Aorta (tissue), 5 donors: ENCODE measurements at regions of chr5 and their contacts with region 1.

Region 1: GRCh38 chr5:10627160-10627701 is 63.4 kb downstream of the ANKRD33B start:
- DNase-seq: no peak
- ATAC-seq: peak; percentile 9
- H3K4me3 ChIP-seq: peak overlapping the region in 1 of 2 donors; percentile 15
- H3K27ac ChIP-seq: peak overlapping the region; percentile 2 to 46
- H3K4me1 ChIP-seq: no peaks in the 10 kb centered on the region
- H3K27me3 ChIP-seq: no peaks in the 10 kb centered on the region

Region 2: DNA sequence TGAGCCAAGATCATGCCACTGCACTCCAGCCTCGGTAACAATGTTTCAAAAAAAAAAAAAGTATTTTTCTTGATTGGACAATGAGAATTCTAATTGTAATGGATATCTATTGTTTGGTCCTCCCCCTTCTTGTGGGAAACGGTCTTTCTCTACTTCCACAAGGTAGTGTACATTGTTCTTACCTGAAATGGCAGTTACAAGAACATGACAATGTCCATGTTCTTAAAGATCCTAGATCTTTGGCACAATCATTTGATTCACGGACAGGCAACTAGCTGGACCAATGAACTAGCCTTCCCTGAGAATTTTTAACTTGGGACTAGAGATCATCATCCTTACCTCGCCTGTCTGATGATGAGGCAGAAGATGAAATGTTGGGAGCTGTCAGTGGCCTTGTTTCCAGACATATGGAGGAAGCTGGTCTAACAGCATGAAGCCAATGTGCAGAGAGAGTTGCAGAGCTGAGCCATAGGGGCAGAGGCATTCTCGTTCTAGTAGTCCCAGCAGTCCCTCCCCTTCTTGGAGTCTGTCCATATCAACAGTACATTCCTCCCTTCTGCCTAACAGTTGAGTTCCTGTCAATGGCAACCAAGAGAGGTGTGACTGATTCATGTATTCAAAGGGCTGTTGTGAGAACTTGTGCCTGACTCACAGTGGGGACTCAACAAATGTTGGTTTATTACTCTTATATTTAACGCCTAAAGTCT is 275.9 kb before region 1 on chr5:
- intact Hi-C with region 1: no loop called
- DNase-seq: no peak
- ATAC-seq: no peak
- H3K4me3 ChIP-seq: no peak overlapping the region
- H3K27ac ChIP-seq: peak overlapping the region in 1 of 2 donors; percentile 13
- H3K4me1 ChIP-seq: peaks cover 0 to 2% of the 10 kb centered on the region in 2 donors
- H3K27me3 ChIP-seq: no peaks in the 10 kb centered on the region

Region 3: GRCh38 chr5:10452768-10453331 is 174.4 kb before region 1 on chr5:
- intact Hi-C with region 1: loop called (anchors 1 to 2 kb)
- DNase-seq: no peak
- ATAC-seq: peak; percentile 90
- H3K4me3 ChIP-seq: no peak overlapping the region
- H3K27ac ChIP-seq: no peak overlapping the region
- H3K4me1 ChIP-seq: no peaks in the 10 kb centered on the region
- H3K27me3 ChIP-seq: no peaks in the 10 kb centered on the region

Region 4: GRCh38 chr5:10756549-10756948 is 129.3 kb after region 1 on chr5:
- intact Hi-C with region 1: no loop called
- DNase-seq: no peak
- ATAC-seq: no peak
- H3K4me3 ChIP-seq: no peak overlapping the region
- H3K27ac ChIP-seq: peak overlapping the region in 1 of 2 donors; percentile 29
- H3K4me1 ChIP-seq: peaks cover 0 to 2% of the 10 kb centered on the region in 2 donors
- H3K27me3 ChIP-seq: no peaks in the 10 kb centered on the region